ENCODE measurements at regions of chr13 and their contacts with region 1.

Region 1: DNA sequence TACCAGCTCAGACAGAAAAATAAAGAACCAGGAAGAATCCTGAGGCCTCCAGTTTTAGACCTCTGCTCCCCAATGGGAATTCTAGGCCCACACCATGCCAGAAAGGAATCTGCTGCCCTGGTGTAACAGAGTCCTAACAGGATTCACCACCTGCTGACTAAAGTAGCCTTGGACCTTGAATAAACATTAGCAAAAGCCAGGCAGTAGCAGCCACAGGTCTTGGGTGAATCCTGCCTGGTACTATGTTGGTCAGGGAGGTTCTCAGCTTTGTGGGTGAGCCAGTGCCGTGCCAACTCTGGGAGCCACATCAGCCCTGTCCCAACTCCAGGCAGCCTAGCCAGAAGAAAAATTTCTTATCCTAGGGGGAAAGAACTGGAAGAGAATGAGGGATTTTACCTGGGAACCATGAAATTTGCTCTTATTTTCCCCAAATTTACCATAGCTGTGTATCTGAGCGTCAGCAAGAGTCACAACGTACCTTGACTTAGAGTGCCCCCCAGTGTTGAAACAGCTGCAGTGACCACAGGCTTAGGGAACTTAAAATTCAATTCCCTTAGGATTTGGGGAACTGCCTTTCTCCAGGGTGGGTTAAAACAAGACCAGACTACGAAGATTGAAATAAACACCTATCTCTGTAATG is 1895.6 kb upstream of the PRR20A start:
- DNase-seq: peak; percentile 62
- ATAC-seq: peak; percentile 95
- H3K4me3 Mint-ChIP-seq: no peak overlapping the region
- H3K27ac Mint-ChIP-seq: peak overlapping the region; percentile 79
- H3K4me1 Mint-ChIP-seq: peaks cover 17% of the 10 kb centered on the region
- H3K27me3 Mint-ChIP-seq: no peaks in the 10 kb centered on the region
- CTCF ChIP-seq: peak; percentile 76

Region 2: GRCh38 chr13:53782488-53782961 is 1462.6 kb before region 1 on chr13:
- CTCF ChIA-PET with region 1: interaction called, 29 read pairs
- POLR2A ChIA-PET with region 1: no interaction called
- DNase-seq: no peak
- ATAC-seq: peak; percentile 76
- H3K4me3 Mint-ChIP-seq: peak overlapping the region; percentile 56
- H3K27ac Mint-ChIP-seq: no peak overlapping the region
- H3K4me1 Mint-ChIP-seq: peaks cover 37% of the 10 kb centered on the region
- H3K27me3 Mint-ChIP-seq: peaks cover 5% of the 10 kb centered on the region; the same call in 1 of the 2 replicates
- CTCF ChIP-seq: peak; percentile 80

Region 3: GRCh38 chr13:54185785-54186184 is 1059.3 kb before region 1 on chr13:
- CTCF ChIA-PET with region 1: interaction called, 18 read pairs
- POLR2A ChIA-PET with region 1: no interaction called
- DNase-seq: peak; percentile 51
- ATAC-seq: peak; percentile 97
- H3K4me3 Mint-ChIP-seq: no peak overlapping the region
- H3K27ac Mint-ChIP-seq: peak overlapping the region; percentile 78
- H3K4me1 Mint-ChIP-seq: peaks cover 53% of the 10 kb centered on the region
- H3K27me3 Mint-ChIP-seq: no peaks in the 10 kb centered on the region
- CTCF ChIP-seq: peak; percentile 46

Region 4: DNA sequence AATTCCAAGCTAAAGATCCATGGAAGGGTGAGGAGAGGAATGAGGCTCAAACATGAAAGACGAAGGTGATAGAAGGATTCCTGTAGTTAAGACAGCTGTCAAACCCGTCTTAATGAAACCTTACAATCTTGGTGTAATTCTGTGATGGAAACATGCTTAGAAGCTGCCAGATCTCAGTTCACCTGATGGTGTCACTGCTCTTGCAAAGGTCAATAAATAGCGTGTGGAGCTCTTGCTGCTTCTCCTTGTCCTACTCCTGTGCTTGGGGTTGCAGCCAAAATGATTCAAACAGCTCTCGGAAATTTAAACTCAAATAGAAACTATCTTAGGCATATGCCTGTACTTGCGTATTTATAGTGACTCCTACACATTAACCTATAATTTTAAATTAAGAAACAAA is 511.5 kb before region 1 on chr13:
- CTCF ChIA-PET with region 1: interaction called, 20 read pairs
- POLR2A ChIA-PET with region 1: no interaction called
- DNase-seq: peak; percentile 17
- ATAC-seq: peak; percentile 98
- H3K4me3 Mint-ChIP-seq: no peak overlapping the region
- H3K27ac Mint-ChIP-seq: peak overlapping the region; percentile 9
- H3K4me1 Mint-ChIP-seq: peaks cover 17% of the 10 kb centered on the region
- H3K27me3 Mint-ChIP-seq: no peaks in the 10 kb centered on the region
- CTCF ChIP-seq: no peak

Region 5: GRCh38 chr13:55199134-55199533 is 46.0 kb before region 1 on chr13:
- CTCF ChIA-PET with region 1: interaction called, 11 read pairs
- POLR2A ChIA-PET with region 1: no interaction called
- DNase-seq: no peak
- ATAC-seq: peak; percentile 83
- H3K4me3 Mint-ChIP-seq: no peak overlapping the region
- H3K27ac Mint-ChIP-seq: no peak overlapping the region
- H3K4me1 Mint-ChIP-seq: peaks cover 27% of the 10 kb centered on the region
- H3K27me3 Mint-ChIP-seq: no peaks in the 10 kb centered on the region
- CTCF ChIP-seq: no peak

Measured in WTC11 (cell line).